ENCODE measurements at regions of chr20 and their contacts with region 1.

Region 1: GRCh38 chr20:49330544-49331239 is 52.8 kb upstream of the ZNFX1 start:
- DNase-seq: no peak
- H3K4me3 Mint-ChIP-seq: no peak overlapping the region
- H3K27ac Mint-ChIP-seq: no peak overlapping the region
- H3K4me1 Mint-ChIP-seq: no peaks in the 10 kb centered on the region
- H3K27me3 Mint-ChIP-seq: peaks cover 31% of the 10 kb centered on the region

Region 2: DNA sequence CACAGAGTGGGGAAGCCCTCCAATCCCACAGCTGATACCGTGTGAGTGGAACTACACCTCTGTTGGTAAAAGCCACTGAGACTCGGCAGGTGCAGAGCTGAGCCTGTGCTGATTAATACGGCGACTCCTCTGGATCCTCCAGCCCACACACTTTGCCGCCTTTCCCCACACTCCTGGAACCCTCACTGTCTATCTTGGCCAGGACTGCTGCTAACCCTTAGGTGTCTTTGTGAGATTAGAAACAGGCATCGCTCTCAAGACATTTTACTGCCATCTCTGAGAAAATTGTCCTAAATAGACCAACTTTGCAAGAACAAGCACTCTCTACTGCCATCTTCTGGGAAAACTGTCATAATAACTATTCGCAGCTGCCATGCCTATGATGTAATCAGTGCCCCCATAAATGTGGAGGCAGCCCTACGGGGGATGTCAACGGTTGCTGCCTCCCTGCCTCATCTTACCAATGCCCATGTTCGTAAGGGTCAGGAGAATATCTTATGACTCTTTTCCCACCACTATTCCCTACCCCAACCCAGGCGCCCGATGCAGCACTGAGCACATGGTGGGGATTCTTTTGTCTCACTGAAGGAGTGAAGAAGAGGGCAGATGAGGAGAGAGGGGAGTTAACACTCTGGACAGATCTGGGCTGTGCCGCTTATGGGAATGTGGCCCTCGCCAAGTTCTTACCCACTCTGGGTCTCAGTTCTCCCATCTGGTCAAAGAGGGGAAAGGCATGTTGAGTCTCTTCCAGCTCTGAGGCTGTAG is 177.9 kb after region 1 on chr20:
- CTCF ChIA-PET with region 1: interaction called, 29 read pairs
- POLR2A ChIA-PET with region 1: no interaction called
- intact Hi-C with region 1: loop called (anchors 1 kb)
- DNase-seq: no peak
- H3K4me3 Mint-ChIP-seq: no peak overlapping the region
- H3K27ac Mint-ChIP-seq: no peak overlapping the region
- H3K4me1 Mint-ChIP-seq: peaks cover 3% of the 10 kb centered on the region
- H3K27me3 Mint-ChIP-seq: peaks cover 46% of the 10 kb centered on the region

Measured in activated CD4-positive, alpha-beta memory T cell treated with anti-CD3 and anti-CD28 coated beads for 36 hours (primary cell).